HepG2 (cell line): ENCODE measurements at regions of chr19 and their contacts with region 1.

Region 1: GRCh38 chr19:36850559-36851442 is at the start of gene ZNF345:
- DNase-seq: peak; percentile 95
- ATAC-seq: peak; percentile 94
- H3K4me3 ChIP-seq: peak within 1 kb of the TSS; percentile 88 to 98 (median 96)
- H3K27ac ChIP-seq: peak within 1 kb of the TSS; percentile 67
- H3K4me1 ChIP-seq: peaks cover 12% of the 10 kb centered on the region
- H3K27me3 ChIP-seq: peaks cover 0 to 4% of the 10 kb centered on the region in 2 experiments; a peak in 1 of 5 replicates
- CTCF ChIP-seq: no peak
- EP300 ChIP-seq: no peak
- POLR2A ChIP-seq: peak; percentile 76 to 77; a peak in 3 of 4 replicates
- RAD21 ChIP-seq: no peak
- total RNA-seq, gene ZNF345: 2.9 and 3.0 TPM in 2 replicates

Region 2: GRCh38 chr19:36528194-36528920 is 322.4 kb before region 1 on chr19 and contains the start of gene ZNF260:
- CTCF ChIA-PET with region 1: no interaction called
- POLR2A ChIA-PET with region 1: interaction called, 13 read pairs
- in situ Hi-C with region 1: no loop called
- intact Hi-C with region 1: no loop called
- DNase-seq: peak; percentile 95
- ATAC-seq: peak; percentile 96
- H3K4me3 ChIP-seq: peak within 1 kb of the TSS; percentile 73 to 93 (median 85)
- H3K27ac ChIP-seq: peak within 1 kb of the TSS; percentile 86
- H3K4me1 ChIP-seq: peaks cover 18% of the 10 kb centered on the region
- H3K27me3 ChIP-seq: no peaks in the 10 kb centered on the region; a peak in 1 of 5 replicates
- CTCF ChIP-seq: 0 out of 2 replicates have a peak, but pooled peaks have one; percentile 3
- EP300 ChIP-seq: no peak
- POLR2A ChIP-seq: peak; percentile 77 to 90
- RAD21 ChIP-seq: peak; percentile 25; the same call in 1 of the 2 replicates
- total RNA-seq, gene ZNF260: 10.5 and 19.9 TPM in 2 replicates

Region 3: GRCh38 chr19:36772311-36773222 is 78.2 kb before region 1 on chr19 and contains the start of gene ZNF850:
- CTCF ChIA-PET with region 1: no interaction called
- POLR2A ChIA-PET with region 1: interaction called, 13 read pairs
- in situ Hi-C with region 1: no loop called
- intact Hi-C with region 1: loop called (anchors 5 kb)
- DNase-seq: peak; percentile 87
- ATAC-seq: peak; percentile 95
- H3K4me3 ChIP-seq: peak within 1 kb of the TSS; percentile 73 to 93 (median 78)
- H3K27ac ChIP-seq: peak within 1 kb of the TSS; percentile 79
- H3K4me1 ChIP-seq: 0 out of 2 replicates have a peak, but pooled peaks cover 5% of the 10 kb centered on the region
- H3K27me3 ChIP-seq: no peaks in the 10 kb centered on the region; a peak in 1 of 5 replicates
- CTCF ChIP-seq: no peak
- EP300 ChIP-seq: no peak
- POLR2A ChIP-seq: peak; percentile 49 to 65
- RAD21 ChIP-seq: no peak
- total RNA-seq, gene ZNF850: 6.6 and 11.4 TPM in 2 replicates

Region 4: DNA sequence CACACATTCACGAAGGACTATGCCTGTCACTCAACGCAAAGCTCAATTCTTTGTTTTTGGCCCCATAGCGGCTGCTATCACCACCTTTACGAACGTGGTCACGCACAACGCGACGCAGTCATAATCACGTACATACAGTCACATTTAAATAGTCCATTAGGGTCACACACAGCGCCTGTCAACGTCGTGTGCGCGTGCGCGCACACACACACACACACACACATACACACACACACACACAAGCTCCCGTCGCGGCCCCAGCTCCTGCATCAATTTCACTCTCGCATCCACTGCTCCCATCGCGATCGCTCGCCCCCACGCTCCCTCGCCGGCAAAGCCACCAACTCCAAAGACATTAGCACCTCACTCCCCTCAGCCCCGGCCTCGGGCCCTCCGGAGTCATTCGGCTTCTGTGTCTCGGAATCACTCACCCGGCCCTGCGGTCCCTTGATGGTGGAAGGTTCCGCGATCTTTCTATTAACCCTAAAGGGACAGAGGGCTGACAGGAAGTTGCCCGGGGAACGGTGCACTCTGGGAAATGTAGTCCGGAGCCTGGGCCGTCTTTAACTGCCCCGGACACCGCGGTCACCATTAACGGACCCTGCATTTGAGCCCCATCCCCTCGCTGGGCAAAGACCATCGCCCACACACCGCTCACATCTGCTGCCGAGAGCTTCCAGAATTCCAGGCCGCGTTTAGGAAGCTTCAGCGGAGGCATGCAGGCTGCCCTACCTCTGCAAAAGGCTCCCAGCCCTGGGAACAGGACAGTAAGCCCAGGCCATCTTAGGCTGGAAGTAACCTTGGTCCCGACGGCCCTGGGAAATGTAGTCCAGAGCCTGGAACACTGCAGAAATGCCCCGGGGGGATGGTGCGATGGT is 12.7 kb before region 1 on chr19 and contains the start of gene ZNF790:
- CTCF ChIA-PET with region 1: no interaction called
- POLR2A ChIA-PET with region 1: interaction called, 169 read pairs
- in situ Hi-C with region 1: no loop called
- intact Hi-C with region 1: loop called (anchors 1 kb)
- DNase-seq: peak; percentile 89
- ATAC-seq: peak; percentile 96
- H3K4me3 ChIP-seq: peak within 1 kb of the TSS; percentile 77 to 85 (median 84)
- H3K27ac ChIP-seq: peak within 1 kb of the TSS; percentile 86
- H3K4me1 ChIP-seq: peaks cover 19% of the 10 kb centered on the region
- H3K27me3 ChIP-seq: no peaks in the 10 kb centered on the region; a peak in 1 of 5 replicates
- CTCF ChIP-seq: no peak
- EP300 ChIP-seq: 0 out of 4 replicates have a peak, but pooled peaks of 1 of the 2 experiments have one; percentile 16
- POLR2A ChIP-seq: peak; percentile 61 to 78; a peak in 3 of 4 replicates
- RAD21 ChIP-seq: 0 out of 2 replicates have a peak, but pooled peaks have one; percentile 23
- total RNA-seq, gene ZNF790: 5.3 and 8.5 TPM in 2 replicates

Region 5: DNA sequence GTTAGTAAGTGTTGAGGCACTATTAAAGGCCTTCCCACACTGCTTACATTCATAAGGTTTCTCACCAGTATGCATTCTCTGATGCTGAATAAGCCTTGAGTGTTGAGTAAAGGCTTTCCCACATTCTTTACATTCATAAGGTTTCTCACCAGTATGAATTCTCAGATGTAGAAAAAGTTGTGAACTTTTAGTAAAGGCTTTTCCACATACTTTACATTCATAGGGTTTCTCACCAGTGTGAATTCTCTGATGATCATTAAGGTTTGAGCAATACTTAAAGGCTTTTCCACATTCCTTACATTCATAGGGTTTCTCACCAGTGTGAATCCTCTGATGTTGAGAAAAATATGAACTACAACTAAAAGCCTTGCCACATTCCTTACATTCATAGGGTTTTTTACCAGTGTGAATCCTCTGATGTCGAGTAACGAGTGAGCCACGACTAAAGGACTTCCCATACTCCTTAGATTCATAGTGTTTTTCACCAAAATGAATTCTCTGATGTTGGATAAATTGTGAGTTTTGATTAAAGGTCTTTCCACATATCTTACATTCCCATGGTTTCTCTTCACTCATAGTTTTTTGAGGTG is 41.1 kb after region 1 on chr19:
- CTCF ChIA-PET with region 1: no interaction called
- POLR2A ChIA-PET with region 1: no interaction called
- in situ Hi-C with region 1: no loop called
- intact Hi-C with region 1: no loop called
- DNase-seq: no peak
- ATAC-seq: no peak
- H3K4me3 ChIP-seq: no peak overlapping the region
- H3K27ac ChIP-seq: no peak overlapping the region
- H3K4me1 ChIP-seq: no peaks in the 10 kb centered on the region
- H3K27me3 ChIP-seq: no peaks in the 10 kb centered on the region
- CTCF ChIP-seq: no peak
- EP300 ChIP-seq: no peak
- POLR2A ChIP-seq: no peak
- RAD21 ChIP-seq: no peak

Region 6: GRCh38 chr19:37370880-37371661 is 520.3 kb after region 1 on chr19 and contains the start of gene ZNF527:
- CTCF ChIA-PET with region 1: no interaction called
- POLR2A ChIA-PET with region 1: interaction called, 10 read pairs
- in situ Hi-C with region 1: no loop called
- intact Hi-C with region 1: no loop called
- DNase-seq: peak; percentile 96
- ATAC-seq: peak; percentile 98
- H3K4me3 ChIP-seq: peak within 1 kb of the TSS; percentile 58 to 86 (median 80)
- H3K27ac ChIP-seq: peak within 1 kb of the TSS; percentile 67
- H3K4me1 ChIP-seq: peaks cover 8% of the 10 kb centered on the region
- H3K27me3 ChIP-seq: no peaks in the 10 kb centered on the region; a peak in 1 of 5 replicates
- CTCF ChIP-seq: peak; percentile 24; the same call in 1 of the 2 replicates
- EP300 ChIP-seq: peak in 1 of 2 experiments; percentile 26; a peak in 1 of 4 replicates
- POLR2A ChIP-seq: peak in 1 of 2 experiments; percentile 85
- RAD21 ChIP-seq: peak; percentile 47; the same call in 1 of the 2 replicates
- total RNA-seq, gene ZNF527: 3.5 and 4.2 TPM in 2 replicates